ENCODE measurements at regions of chr6 and their contacts with region 1.

Region 1: DNA sequence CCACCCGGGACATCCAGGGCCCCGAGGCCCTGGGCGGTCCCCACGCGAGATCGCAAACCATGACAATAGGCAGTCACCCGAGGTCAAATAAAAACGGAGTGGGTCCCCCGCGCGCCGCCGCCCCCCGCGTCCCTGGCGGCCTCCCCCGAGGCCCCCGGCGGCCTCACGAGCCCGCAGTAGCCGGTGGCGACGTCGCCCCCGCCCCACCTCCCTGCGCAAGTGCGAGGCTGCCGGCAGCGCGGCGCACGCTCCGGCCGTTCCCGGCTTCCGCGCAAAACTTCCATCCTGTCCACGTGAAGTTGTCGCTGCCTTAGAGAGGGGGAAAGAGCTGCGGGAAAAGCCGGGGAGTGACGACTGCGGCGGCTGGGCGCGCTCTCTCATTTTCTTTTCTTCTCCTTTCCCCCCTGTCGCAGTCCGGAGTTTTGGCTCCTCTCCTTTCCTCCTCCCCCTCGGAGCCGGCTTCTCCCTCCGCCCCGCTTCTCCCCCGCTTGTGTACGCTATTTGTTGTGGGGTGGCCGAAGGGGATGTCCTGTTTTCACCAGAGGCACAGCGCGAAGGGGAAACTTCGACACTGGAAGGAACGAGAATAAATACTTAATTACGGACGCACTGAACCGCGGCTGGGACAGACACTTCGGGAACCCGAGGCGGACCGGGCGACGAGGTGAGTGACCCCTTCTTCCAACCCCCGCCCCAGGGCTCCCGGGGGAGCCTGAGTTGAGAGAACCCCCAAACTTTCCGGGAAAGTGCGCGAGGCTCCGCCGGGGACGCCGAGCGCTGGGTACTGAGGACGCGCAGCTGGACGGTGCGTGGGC is at the start of gene EYA4:
- DNase-seq: peak; percentile 74
- ATAC-seq: peak; percentile 73
- H3K4me3 ChIP-seq: peak within 1 kb of the TSS; percentile 77
- H3K27ac ChIP-seq: peak within 1 kb of the TSS; percentile 97
- H3K4me1 ChIP-seq: peaks cover 3% of the 10 kb centered on the region
- H3K27me3 ChIP-seq: no peaks in the 10 kb centered on the region
- CTCF ChIP-seq: 0 out of 2 replicates have a peak, but pooled peaks have one; percentile 13
- POLR2A ChIP-seq: no peak
- RAD21 ChIP-seq: no peak
- total RNA-seq, gene EYA4: 11.1 and 11.9 TPM in 2 replicates

Region 2: DNA sequence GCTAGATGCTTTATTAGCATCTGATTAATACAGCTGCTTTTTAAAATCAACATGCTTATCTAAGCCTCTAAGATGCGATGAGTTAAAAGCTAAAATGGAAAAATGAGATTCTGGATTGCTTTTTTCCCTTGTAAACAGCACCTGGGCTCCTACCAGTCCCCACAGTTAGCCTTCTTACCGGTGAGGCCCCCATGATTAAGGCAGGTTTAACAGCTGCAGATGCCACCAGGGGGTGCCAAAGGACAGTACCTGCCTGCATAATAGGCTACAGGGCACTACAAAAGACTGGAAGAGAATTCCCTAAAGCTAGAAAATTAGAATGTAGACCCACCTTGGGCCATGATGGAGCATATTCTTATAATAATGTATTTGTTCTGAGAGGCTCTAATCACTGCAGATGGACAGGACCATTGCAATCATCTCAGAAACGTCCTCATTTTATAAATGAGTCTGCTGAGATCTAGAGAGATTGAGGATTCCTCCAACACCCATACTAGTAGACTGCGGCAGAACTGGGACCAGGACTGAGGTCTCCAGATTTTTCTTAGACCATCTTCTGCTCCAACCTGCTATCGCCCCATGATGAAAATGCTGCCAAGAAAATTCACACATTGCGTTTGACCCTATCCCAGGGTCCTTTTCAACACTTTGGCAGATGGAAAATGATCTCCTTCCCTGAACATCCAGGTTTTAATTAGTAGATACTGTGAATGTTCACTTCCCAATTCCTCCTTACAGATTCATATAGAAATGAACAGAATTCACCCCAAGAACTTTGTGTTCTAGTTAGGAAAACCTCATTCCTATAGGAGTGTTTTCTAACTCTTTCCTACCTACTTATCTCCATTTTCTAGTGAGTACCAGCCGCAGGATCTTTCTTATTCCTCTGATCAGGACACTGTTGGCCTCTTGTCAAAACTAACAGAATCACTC is 278.1 kb before region 1 on chr6:
- CTCF ChIA-PET with region 1: no interaction called
- POLR2A ChIA-PET with region 1: no interaction called
- dilution Hi-C with region 1: no loop called
- in situ Hi-C with region 1: no loop called
- intact Hi-C with region 1: loop called (anchors 1 kb)
- DNase-seq: peak; percentile 77
- ATAC-seq: peak; percentile 60
- H3K4me3 ChIP-seq: no peak overlapping the region
- H3K27ac ChIP-seq: no peak overlapping the region
- H3K4me1 ChIP-seq: peaks cover 9% of the 10 kb centered on the region
- H3K27me3 ChIP-seq: no peaks in the 10 kb centered on the region
- CTCF ChIP-seq: peak; percentile 71
- POLR2A ChIP-seq: no peak
- RAD21 ChIP-seq: peak; percentile 82

Region 3: GRCh38 chr6:133130863-133131262 is 110.4 kb before region 1 on chr6:
- CTCF ChIA-PET with region 1: no interaction called
- POLR2A ChIA-PET with region 1: no interaction called
- dilution Hi-C with region 1: no loop called
- in situ Hi-C with region 1: no loop called
- intact Hi-C with region 1: no loop called
- DNase-seq: peak; percentile 66
- ATAC-seq: peak; percentile 64
- H3K4me3 ChIP-seq: no peak overlapping the region
- H3K27ac ChIP-seq: no peak overlapping the region
- H3K4me1 ChIP-seq: peaks cover 20% of the 10 kb centered on the region
- H3K27me3 ChIP-seq: no peaks in the 10 kb centered on the region
- CTCF ChIP-seq: peak; percentile 9; the same call in 1 of the 2 replicates
- POLR2A ChIP-seq: no peak
- RAD21 ChIP-seq: no peak

Region 4: GRCh38 chr6:133184798-133185372 is 56.4 kb before region 1 on chr6:
- CTCF ChIA-PET with region 1: interaction called, 5 read pairs
- POLR2A ChIA-PET with region 1: no interaction called
- dilution Hi-C with region 1: no loop called
- in situ Hi-C with region 1: no loop called
- intact Hi-C with region 1: loop called (anchors 2 kb)
- DNase-seq: peak; percentile 53
- ATAC-seq: peak; percentile 49; the same call in 1 of the 2 replicates
- H3K4me3 ChIP-seq: no peak overlapping the region
- H3K27ac ChIP-seq: no peak overlapping the region
- H3K4me1 ChIP-seq: 0 out of 2 replicates have a peak, but pooled peaks cover 2% of the 10 kb centered on the region
- H3K27me3 ChIP-seq: no peaks in the 10 kb centered on the region
- CTCF ChIP-seq: peak; percentile 70
- POLR2A ChIP-seq: no peak
- RAD21 ChIP-seq: peak; percentile 69

Region 5: GRCh38 chr6:133341607-133342158 is 100.4 kb after region 1 on chr6:
- CTCF ChIA-PET with region 1: no interaction called
- POLR2A ChIA-PET with region 1: no interaction called
- dilution Hi-C with region 1: no loop called
- in situ Hi-C with region 1: no loop called
- intact Hi-C with region 1: loop called (anchors 5 kb)
- DNase-seq: peak; percentile 93
- ATAC-seq: peak; percentile 60
- H3K4me3 ChIP-seq: no peak overlapping the region
- H3K27ac ChIP-seq: peak overlapping the region; percentile 50
- H3K4me1 ChIP-seq: peaks cover 13% of the 10 kb centered on the region
- H3K27me3 ChIP-seq: no peaks in the 10 kb centered on the region
- CTCF ChIP-seq: no peak
- POLR2A ChIP-seq: no peak
- RAD21 ChIP-seq: no peak

Region 6: DNA sequence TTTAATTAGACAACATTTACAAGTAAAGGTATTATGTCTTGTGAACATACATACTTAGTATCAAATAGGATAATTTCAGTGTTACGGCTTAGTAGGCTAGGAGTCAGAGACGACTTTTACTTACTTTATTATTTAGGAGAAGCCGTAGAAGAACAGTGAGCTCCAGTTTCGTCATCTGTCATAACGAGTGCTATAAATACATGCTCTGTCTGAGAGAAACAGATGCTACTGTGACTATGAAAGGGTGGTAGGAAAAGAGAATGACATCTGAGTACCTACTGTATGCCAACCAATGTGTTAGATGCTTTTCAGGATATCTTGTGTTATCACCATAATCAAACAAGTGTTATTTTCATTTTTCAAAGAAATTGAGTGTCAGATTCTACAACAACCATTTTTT is 118.9 kb after region 1 on chr6:
- CTCF ChIA-PET with region 1: no interaction called
- POLR2A ChIA-PET with region 1: no interaction called
- dilution Hi-C with region 1: no loop called
- in situ Hi-C with region 1: no loop called
- intact Hi-C with region 1: no loop called
- DNase-seq: no peak
- ATAC-seq: no peak
- H3K4me3 ChIP-seq: no peak overlapping the region
- H3K27ac ChIP-seq: no peak overlapping the region
- H3K4me1 ChIP-seq: peaks cover 5% of the 10 kb centered on the region
- H3K27me3 ChIP-seq: no peaks in the 10 kb centered on the region
- CTCF ChIP-seq: no peak
- POLR2A ChIP-seq: no peak
- RAD21 ChIP-seq: no peak

Region 7: GRCh38 chr6:133502441-133503259 is 261.4 kb after region 1 on chr6:
- CTCF ChIA-PET with region 1: interaction called, 3 read pairs
- POLR2A ChIA-PET with region 1: no interaction called
- dilution Hi-C with region 1: no loop called
- in situ Hi-C with region 1: no loop called
- intact Hi-C with region 1: loop called (anchors 2 kb)
- DNase-seq: peak; percentile 94
- ATAC-seq: peak; percentile 93
- H3K4me3 ChIP-seq: no peak overlapping the region
- H3K27ac ChIP-seq: peak overlapping the region; percentile 29; the same call in 1 of the 2 replicates
- H3K4me1 ChIP-seq: peaks cover 4% of the 10 kb centered on the region
- H3K27me3 ChIP-seq: no peaks in the 10 kb centered on the region
- CTCF ChIP-seq: no peak
- POLR2A ChIP-seq: no peak
- RAD21 ChIP-seq: no peak